Left colon (tissue), 2 donors: ENCODE measurements at regions of chr11 and their contacts with region 1.

Region 1: GRCh38 chr11:120344302-120345004 is 8.2 kb downstream of the ARHGEF12 start:
- DNase-seq: no peak
- ATAC-seq: no peak

Region 2: GRCh38 chr11:120391292-120391691 is 46.8 kb after region 1 on chr11:
- intact Hi-C with region 1: loop called in 1 of 2 experiments (anchors 10 kb)
- DNase-seq: no peak
- ATAC-seq: peak; percentile 53

Region 3: DNA sequence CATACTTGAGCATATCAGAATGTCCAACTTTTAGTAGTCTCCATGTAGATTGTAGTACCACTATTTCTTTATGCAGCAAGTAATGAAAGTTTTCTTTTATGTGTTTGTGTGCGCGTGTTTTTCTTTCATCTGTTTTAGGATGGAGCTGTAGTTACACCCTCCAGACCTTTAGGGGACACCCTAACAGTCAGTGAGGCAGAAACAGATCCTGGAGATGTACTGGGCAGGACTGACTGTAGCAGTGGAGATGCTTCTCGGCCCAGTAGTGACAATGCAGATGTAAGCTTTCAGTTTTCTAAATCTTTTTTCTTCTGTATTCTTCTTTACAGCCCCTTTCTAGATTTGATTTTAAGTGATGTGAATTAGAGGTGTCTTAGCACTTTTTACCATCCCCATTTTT is 87.2 kb after region 1 on chr11:
- intact Hi-C with region 1: no loop called
- DNase-seq: no peak
- ATAC-seq: no peak

Region 4: DNA sequence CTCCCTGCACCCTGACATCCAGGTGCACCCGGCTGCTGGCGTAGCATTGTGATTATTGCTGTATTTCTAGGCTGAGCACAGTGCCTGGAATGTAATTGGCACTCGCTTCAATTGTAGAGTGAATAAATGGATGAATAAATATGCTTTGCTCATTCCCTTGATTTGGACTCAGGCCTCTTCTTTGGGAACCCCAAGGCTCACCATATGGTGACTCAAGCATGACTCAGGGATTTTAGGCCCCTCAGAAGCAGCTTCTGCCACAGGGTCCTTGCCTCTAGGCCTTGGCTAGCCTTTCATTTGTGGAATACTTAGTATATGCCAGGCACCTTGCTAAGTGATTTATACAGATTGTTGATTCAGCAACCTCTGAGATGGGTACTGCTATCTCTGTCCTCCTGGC is 246.0 kb after region 1 on chr11:
- intact Hi-C with region 1: no loop called
- DNase-seq: no peak
- ATAC-seq: no peak